ENCODE measurements at regions of chr16 and their contacts with region 1.

Region 1: DNA sequence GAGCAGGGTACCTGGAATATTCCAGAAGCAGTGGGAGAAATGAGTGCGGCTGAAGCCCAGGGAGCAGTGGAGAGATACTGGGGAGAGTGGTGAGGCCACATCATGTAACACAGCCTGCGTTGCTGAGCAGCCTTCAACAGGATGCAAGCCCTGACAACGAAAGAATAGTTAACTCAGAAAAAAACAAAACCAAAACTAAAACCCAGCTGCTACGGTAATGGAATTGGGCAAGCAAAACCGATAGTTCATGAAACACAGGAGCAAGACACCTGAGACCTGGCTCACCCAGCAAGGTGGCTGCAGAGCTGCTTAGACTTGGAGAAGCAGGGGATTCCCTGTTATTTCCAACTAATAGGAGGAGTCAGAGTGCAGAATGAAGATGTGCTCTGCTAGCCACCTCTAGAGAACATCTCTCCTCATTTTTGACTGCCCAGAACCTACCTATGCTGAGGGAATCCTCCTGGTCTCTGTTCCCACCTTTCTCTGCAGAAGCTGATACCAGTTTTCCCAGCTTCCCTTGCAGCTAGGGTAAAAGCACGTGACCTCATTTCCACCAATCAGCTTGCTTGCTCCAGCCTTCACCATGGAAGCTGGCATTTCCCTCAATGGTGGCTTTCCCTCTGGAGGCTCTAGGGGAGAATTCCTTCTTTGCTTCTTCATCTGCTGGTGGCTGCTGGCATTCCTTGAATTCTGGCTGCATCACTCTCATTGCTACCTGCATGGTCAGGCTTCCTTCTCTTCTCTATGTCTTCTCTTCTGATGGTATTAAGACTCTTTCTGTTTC is 59.4 kb upstream of the XYLT1 start:
- DNase-seq: peak; percentile 1 to 53 (median 41)
- H3K4me3 ChIP-seq: peak overlapping the region; percentile 47
- H3K4me3 Mint-ChIP-seq: peak overlapping the region; percentile 66 to 94 (median 90)
- H3K27ac ChIP-seq: no peak overlapping the region
- H3K27ac Mint-ChIP-seq: peak overlapping the region; percentile 44 to 97 (median 95)
- H3K4me1 ChIP-seq: no peaks in the 10 kb centered on the region
- H3K4me1 Mint-ChIP-seq: peaks cover 15 to 34% (median 15%) of the 10 kb centered on the region in 3 donors
- H3K27me3 ChIP-seq: no peaks in the 10 kb centered on the region
- H3K27me3 Mint-ChIP-seq: no peaks in the 10 kb centered on the region

Region 2: DNA sequence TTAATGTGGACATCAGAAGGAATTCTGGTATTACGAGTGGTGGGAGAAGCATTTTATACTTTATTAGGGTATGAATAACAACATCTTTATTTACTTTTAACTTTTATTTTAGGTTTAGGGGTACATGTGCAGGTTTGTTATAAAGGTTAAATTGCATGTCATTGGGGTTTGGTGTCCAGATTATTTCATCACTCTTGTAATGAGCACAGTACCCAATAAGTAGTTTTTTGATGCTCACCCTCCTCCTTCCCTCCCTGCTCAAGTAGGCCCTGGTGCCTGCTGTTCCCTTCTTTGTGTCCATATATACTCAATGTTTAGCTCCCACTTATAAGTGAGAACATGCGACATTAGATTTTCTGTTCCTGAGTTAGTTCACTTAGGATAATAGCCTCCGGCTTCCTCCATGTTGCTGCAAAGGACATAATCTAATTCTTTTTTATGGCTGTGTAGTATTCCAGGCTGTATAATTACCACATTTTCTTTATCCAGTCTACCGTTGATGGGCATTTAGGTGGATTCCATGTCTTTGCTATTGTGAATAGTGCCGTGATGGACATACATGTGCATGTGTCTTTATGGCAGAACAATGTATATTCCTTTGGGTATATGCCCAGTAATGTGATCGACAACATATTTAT is 515.6 kb before region 1 on chr16:
- CTCF ChIA-PET with region 1: no interaction called
- POLR2A ChIA-PET with region 1: interaction called, 10 read pairs
- DNase-seq: no peak
- H3K4me3 ChIP-seq: no peak overlapping the region
- H3K4me3 Mint-ChIP-seq: peak overlapping the region in 6 of 7 donors; percentile 5 to 92 (median 60)
- H3K27ac ChIP-seq: no peak overlapping the region
- H3K27ac Mint-ChIP-seq: peak overlapping the region in 7 of 8 donors; percentile 55 to 99 (median 95)
- H3K4me1 ChIP-seq: peaks cover 8% of the 10 kb centered on the region
- H3K4me1 Mint-ChIP-seq: peaks cover 21 to 31% (median 22%) of the 10 kb centered on the region in 3 donors
- H3K27me3 ChIP-seq: no peaks in the 10 kb centered on the region
- H3K27me3 Mint-ChIP-seq: peaks cover 2 to 4% of the 10 kb centered on the region in 2 donors

Measured in CD8-positive, alpha-beta memory T cell (primary cell).